Breast epithelium (tissue), 4 donors: ENCODE measurements at regions of chr2 and their contacts with region 1.

Region 1: DNA sequence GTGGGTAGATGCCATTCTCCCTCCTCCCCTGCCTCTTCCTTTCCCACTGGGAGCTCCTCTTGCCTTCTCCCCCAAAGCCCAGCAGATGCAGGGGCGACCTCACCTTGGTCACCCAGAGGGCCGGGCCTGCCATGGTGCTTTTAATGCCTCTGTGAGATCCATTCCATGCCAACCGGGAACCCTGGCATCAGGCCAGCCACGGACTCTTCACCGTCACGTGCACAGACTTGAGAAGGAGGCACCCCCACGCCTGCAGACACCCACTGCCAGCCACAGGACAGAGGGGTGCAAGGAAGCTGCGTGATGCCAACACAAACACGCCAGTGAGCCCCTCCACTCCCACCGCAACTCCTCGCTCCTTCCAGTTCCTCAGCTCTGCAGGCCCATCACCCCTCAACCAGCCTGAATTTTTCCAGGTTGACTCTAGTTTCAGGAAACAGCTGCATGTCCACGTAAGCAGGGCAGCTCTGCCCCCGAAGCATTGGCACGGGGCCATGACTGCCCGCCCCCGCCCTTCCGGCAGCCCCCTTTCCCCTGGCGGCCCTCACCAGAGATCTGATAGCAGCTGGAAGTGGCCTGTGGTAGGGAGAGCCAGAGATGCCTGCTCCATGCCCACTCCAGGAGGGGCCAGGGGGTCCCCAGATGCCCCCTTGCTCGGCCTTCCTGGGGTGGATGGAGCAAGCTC is 50.8 kb downstream of the DNMT3A start:
- DNase-seq: no peak
- H3K4me3 ChIP-seq: no peak overlapping the region
- H3K27ac ChIP-seq: peak overlapping the region; percentile 18 to 20
- H3K4me1 ChIP-seq: peaks cover 0 to 16% of the 10 kb centered on the region in 2 donors
- H3K27me3 ChIP-seq: no peaks in the 10 kb centered on the region
- CTCF ChIP-seq: no peak
- POLR2A ChIP-seq: no peak

Region 2: GRCh38 chr2:24959761-24960160 is 331.2 kb before region 1 on chr2:
- intact Hi-C with region 1: no loop called
- DNase-seq: no peak
- H3K4me3 ChIP-seq: no peak overlapping the region
- H3K27ac ChIP-seq: no peak overlapping the region
- H3K4me1 ChIP-seq: no peaks in the 10 kb centered on the region
- H3K27me3 ChIP-seq: no peaks in the 10 kb centered on the region
- CTCF ChIP-seq: no peak
- POLR2A ChIP-seq: no peak

Region 3: GRCh38 chr2:25342372-25343186 is 51.6 kb after region 1 on chr2:
- intact Hi-C with region 1: no loop called
- DNase-seq: peak; percentile 53 to 71
- H3K4me3 ChIP-seq: peak overlapping the region; percentile 63 to 81 (median 75)
- H3K27ac ChIP-seq: peak overlapping the region; percentile 69 to 91
- H3K4me1 ChIP-seq: peaks cover 0 to 5% of the 10 kb centered on the region in 2 donors
- H3K27me3 ChIP-seq: no peaks in the 10 kb centered on the region
- CTCF ChIP-seq: peak; percentile 91 to 99 (median 97)
- POLR2A ChIP-seq: no peak

Region 4: DNA sequence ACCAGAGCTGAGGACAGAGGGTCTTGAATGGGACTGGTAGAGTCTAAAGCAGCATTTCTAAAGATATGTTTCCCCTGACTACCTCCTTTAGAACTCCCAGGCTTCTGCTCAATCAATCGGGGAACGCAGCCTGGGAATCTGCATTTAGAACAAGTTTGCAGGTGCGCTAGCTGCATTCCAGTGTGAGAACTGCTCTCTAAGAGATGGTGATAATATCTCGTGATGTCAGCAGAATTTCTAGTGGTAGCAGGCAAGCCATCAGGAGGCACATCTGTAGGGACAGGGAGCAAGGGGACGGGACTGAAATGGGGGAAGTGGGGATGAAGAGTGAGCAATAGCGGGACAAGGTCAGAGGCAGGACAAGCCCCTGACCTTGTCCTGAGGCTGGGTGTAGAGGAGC is 171.0 kb after region 1 on chr2:
- intact Hi-C with region 1: loop called (anchors 2 kb)
- DNase-seq: no peak
- H3K4me3 ChIP-seq: no peak overlapping the region
- H3K27ac ChIP-seq: no peak overlapping the region
- H3K4me1 ChIP-seq: no peaks in the 10 kb centered on the region
- H3K27me3 ChIP-seq: no peaks in the 10 kb centered on the region
- CTCF ChIP-seq: no peak
- POLR2A ChIP-seq: no peak

Region 5: DNA sequence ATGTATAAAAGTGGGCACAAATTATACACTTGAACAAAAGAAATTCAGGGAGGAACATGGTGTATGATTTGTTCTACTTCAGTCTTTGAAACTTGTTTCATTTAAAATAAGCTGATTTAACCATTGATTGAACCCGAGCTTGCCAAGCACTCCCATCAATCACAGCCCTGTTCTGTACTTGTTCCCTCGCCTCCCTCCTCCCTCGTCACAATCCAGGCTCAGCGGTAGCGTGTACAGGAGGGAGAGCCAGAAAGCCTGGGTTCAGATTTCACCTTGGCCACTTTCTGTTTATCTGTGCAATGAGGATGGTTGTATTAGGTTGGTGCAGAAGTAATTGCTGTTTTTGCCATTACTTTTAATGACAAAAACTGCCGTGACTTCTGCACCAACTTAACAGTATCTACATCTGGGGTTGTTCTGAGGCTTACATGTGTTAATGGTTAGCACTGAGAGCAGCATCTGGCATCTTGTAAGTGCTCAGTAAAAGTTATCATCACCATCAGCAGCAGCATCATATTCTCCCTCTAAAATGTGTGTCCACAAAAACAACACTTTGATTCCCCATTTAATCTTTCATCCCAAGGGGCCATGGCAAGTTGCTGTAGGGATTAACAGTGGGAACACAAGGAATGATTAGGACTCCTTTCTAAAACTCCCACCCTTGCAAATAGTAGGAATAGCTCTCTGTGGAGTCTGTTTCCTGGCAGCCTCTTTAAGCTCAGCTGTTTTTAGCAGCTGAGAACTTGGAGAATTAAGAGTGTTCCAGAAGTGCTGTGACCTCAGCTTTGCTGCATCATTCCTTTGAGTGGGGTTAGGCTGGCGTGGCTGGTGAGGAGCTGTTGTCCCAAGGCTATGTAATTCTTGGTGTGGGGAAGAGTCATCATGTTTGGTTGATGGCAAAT is 1561.7 kb after region 1 on chr2:
- intact Hi-C with region 1: no loop called
- DNase-seq: no peak
- H3K4me3 ChIP-seq: no peak overlapping the region
- H3K27ac ChIP-seq: no peak overlapping the region
- H3K4me1 ChIP-seq: peaks cover 19% of the 10 kb centered on the region in 2 donors
- H3K27me3 ChIP-seq: peaks cover 21 to 47% of the 10 kb centered on the region in 2 donors
- CTCF ChIP-seq: no peak
- POLR2A ChIP-seq: no peak